ENCODE measurements at regions of chr17 and their contacts with region 1.

Region 1: GRCh38 chr17:62968445-62968923 is 2.4 kb downstream of the TANC2 start:
- DNase-seq: peak in 2 of 10 donors; percentile 25 to 32

Region 2: GRCh38 chr17:62703775-62704378 is 264.6 kb before region 1 on chr17:
- intact Hi-C with region 1: loop called (anchors 1 kb)
- DNase-seq: peak; percentile 66 to 97 (median 80)

Measured in posterior cingulate gyrus (tissue), 11 donors.